Transverse colon (tissue), 4 donors: ENCODE measurements at regions of chr13 and their contacts with region 1.

Region 1: GRCh38 chr13:67090856-67091255 is 139.3 kb downstream of the PCDH9 start:
- DNase-seq: no peak
- H3K4me3 ChIP-seq: no peak overlapping the region
- H3K27ac ChIP-seq: no peak overlapping the region
- H3K4me1 ChIP-seq: no peaks in the 10 kb centered on the region
- H3K27me3 ChIP-seq: no peaks in the 10 kb centered on the region
- CTCF ChIP-seq: no peak
- EP300 ChIP-seq: no peak
- POLR2A ChIP-seq: no peak

Region 2: DNA sequence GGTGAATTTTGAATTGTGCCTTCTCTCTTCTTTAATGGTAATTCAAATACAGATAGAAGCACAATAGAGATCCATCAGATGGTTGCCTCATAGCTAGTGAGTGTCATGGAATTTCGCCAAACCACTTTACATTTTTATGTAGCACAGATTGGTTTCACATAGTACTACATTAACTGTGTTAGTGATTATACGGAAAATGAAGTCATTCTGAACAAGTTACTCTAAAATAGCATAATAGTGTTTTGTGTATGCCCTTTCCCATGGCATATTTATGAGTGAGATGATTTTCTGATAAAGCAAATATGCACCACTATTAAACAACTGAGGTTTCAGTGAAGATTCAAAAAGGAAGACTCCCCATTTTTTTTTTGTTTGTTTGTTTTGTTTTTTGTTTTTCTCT is 1484.2 kb before region 1 on chr13:
- in situ Hi-C with region 1: no loop called
- intact Hi-C with region 1: loop called (anchors 5 kb)
- DNase-seq: no peak
- H3K4me3 ChIP-seq: no peak overlapping the region
- H3K27ac ChIP-seq: no peak overlapping the region
- H3K4me1 ChIP-seq: no peaks in the 10 kb centered on the region
- H3K27me3 ChIP-seq: no peaks in the 10 kb centered on the region
- CTCF ChIP-seq: no peak
- EP300 ChIP-seq: no peak
- POLR2A ChIP-seq: no peak